ENCODE measurements at regions of chrX and their contacts with region 1.

Region 1: GRCh38 chrX:72142094-72142793 is 10.5 kb upstream of the RTL5 start:
- DNase-seq: no peak
- H3K4me3 Mint-ChIP-seq: no peak overlapping the region
- H3K27ac Mint-ChIP-seq: no peak overlapping the region
- H3K4me1 Mint-ChIP-seq: peaks cover 33% of the 10 kb centered on the region
- H3K27me3 Mint-ChIP-seq: peaks cover 28% of the 10 kb centered on the region

Region 2: DNA sequence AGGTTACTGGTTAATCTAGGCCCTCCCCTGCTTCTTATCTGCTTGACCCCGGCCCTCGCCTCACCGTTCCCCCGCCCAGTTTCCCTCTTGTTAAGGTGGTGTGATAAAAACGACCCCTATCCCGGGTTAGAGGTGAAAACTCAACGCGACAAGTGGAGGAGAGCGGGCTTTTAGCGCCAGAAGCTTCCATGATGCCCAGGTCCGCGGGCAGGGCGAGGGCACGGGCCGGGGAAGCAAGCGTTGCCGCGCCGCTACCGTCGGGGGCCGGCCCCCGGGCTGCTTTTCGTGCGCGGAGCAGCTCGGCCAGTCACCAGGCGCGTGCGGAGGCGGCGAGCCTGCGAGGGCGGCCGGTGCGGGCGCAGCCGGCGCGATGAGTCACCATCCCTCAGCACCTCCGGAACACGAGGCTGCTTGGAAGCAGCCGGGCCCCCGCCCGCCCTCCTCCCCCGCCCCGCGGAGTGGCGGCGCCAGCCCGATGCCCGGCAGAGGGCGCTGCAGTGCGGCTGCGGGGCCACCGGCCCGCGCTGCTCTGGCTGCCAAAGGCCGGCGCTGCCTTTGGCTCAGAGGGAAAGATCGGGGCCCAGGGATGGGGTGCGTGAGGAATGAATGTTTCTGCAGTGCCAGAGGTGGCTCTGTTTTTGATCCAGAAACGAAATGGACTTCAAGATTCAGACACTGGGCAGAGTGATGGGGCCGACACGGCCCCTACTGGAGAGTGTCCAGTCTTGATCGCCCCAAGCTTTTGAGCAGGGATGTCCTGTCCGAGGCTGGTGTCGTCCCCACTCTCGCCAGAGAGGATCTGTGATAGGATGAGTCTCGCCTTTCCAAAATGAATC is 123.7 kb before region 1 on chrX:
- intact Hi-C with region 1: loop called (anchors 5 kb)
- DNase-seq: peak; percentile 70
- H3K4me3 Mint-ChIP-seq: no peak overlapping the region
- H3K27ac Mint-ChIP-seq: no peak overlapping the region
- H3K4me1 Mint-ChIP-seq: peaks cover 15% of the 10 kb centered on the region
- H3K27me3 Mint-ChIP-seq: peaks cover 44% of the 10 kb centered on the region

Region 3: GRCh38 chrX:72100824-72101351 is 41.4 kb before region 1 on chrX:
- intact Hi-C with region 1: loop called (anchors 2 kb)
- DNase-seq: peak; percentile 71
- H3K4me3 Mint-ChIP-seq: peak overlapping the region; percentile 52
- H3K27ac Mint-ChIP-seq: peak overlapping the region; percentile 85
- H3K4me1 Mint-ChIP-seq: peaks cover 50% of the 10 kb centered on the region
- H3K27me3 Mint-ChIP-seq: peaks cover 40% of the 10 kb centered on the region

Region 4: DNA sequence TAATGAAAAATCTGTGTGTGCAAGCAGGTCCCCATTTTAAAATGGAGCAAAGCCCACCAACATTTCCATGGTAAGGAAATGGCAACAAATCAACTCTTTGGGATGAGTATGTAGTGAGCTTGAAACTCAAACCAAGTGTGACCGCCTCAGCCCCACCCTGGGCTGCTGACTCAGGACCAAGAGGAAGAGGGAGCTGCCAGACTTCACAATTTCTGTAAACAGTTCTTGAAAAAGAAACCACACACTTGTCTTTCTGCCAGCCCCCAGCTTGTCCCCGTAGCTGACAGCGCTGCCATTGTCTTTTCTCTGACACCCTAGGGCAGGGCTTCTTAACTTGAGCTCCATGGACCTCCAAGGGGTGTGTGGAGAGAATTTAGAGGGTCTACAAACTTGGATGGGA is 20.9 kb before region 1 on chrX:
- intact Hi-C with region 1: loop called (anchors 2 kb)
- DNase-seq: no peak
- H3K4me3 Mint-ChIP-seq: peak overlapping the region; percentile 7
- H3K27ac Mint-ChIP-seq: no peak overlapping the region
- H3K4me1 Mint-ChIP-seq: peaks cover 43% of the 10 kb centered on the region
- H3K27me3 Mint-ChIP-seq: peaks cover 35% of the 10 kb centered on the region

Region 5: DNA sequence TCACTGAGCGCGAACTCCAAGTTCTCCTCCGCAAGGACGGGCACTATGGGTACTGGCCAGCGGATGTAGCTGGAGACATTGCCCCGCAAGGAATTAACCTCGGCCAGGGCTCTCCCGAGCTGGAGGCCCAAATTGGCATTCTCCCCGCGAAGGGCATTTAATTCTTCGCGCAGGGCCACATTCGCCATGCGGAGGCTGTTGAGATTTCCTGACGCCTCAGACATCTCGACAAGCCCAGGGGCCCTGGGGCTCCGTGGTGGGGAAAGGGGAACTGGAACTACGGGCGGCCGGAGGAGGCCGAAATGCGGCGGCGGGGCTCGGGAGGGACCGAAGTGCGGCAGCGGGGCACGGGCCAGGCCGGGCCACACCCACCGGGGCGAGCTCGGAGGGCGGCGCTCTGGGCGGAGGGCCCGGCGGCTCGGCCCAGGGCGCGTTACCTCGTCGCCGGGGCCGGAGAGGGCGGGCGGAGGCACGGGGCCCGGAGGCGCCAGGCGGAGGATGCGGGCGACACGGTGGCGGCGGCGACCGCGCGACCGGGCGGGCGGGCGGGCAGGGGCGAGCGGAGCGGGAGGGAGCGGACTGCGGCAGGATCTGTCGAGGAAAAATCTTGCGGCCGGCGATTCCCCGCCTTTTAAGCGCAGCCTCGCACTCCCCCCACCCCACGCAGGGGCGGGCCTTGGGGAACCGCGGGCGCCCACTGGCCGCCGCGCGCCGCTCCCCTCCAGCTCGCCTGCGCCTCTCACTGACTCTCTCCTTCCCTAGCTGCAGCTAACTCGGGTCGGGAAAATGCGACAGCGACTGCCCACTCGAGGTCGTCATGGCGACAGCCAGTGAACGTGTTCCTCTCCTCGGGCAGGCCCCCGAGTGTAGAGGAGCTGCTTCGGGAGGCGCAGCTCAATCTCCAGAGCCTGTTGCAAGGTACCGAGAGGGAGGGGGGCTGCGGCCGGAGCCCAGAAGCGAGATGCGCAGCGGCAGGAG is 10.6 kb before region 1 on chrX and contains the start of gene RTL5:
- intact Hi-C with region 1: no loop called
- DNase-seq: no peak
- H3K4me3 Mint-ChIP-seq: peak within 1 kb of the TSS; percentile 43
- H3K27ac Mint-ChIP-seq: no peak within 1 kb of the TSS
- H3K4me1 Mint-ChIP-seq: peaks cover 7% of the 10 kb centered on the region
- H3K27me3 Mint-ChIP-seq: peaks cover 58% of the 10 kb centered on the region
- total RNA-seq, gene RTL5: 0.26 and 0.29 TPM in 2 replicates

Region 6: DNA sequence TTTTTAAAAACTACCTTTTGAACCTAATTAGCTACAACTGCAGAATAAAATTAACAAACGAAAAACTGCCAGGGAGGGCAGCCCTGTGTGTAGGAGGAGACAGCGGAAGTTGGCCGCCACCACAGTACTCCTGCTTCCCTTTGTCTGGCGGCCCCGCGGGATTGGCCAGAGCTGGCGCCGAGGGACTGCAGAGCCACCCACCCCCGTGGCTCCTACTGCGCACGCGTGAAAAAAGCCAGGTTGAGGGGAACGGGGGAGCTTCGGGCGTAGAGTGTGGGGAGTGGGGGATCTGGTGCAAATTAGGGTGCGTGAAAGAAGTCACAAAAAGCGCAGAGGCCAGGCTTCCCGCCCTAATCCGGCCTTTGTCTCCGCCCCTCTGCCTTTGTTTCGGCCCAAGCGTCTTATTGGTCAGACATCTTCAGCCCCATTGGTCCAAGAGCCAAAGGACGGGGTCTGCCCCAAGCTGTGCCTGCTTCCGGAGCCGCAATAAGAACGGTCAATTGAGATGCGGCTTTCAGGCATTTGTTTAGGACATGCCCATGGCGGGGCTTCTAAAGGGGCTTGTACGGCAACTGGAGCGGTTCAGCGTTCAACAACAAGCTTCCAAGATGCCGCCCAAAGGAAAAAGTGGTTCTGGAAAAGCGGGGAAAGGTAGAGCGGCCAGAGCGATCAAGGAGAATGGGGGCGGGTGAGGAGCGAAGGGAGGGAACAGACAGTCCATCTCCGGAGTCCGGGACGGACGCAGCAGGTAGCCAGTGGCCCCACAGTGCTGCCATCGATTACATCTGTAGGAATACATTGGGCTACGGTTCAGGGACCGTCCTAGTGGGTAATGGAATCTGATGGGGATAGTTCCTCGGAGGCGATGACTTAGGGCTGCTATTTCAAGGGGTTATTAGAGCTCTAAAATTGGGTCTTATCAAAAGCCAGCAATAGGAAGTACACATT is 39.2 kb after region 1 on chrX and contains the start of gene PIN4:
- intact Hi-C with region 1: loop called (anchors 1 kb)
- DNase-seq: peak; percentile 76
- H3K4me3 Mint-ChIP-seq: no peak within 1 kb of the TSS
- H3K27ac Mint-ChIP-seq: no peak within 1 kb of the TSS
- H3K4me1 Mint-ChIP-seq: peaks cover 16% of the 10 kb centered on the region
- H3K27me3 Mint-ChIP-seq: no peaks in the 10 kb centered on the region
- total RNA-seq, gene PIN4: 10.2 and 13.3 TPM in 2 replicates

Region 7: GRCh38 chrX:72238721-72239475 is 96.7 kb after region 1 on chrX and contains the start of gene ERCC6L:
- intact Hi-C with region 1: loop called (anchors 1 kb)
- DNase-seq: peak; percentile 84
- H3K4me3 Mint-ChIP-seq: peak within 1 kb of the TSS; percentile 84
- H3K27ac Mint-ChIP-seq: peak within 1 kb of the TSS; percentile 67
- H3K4me1 Mint-ChIP-seq: peaks cover 9% of the 10 kb centered on the region
- H3K27me3 Mint-ChIP-seq: no peaks in the 10 kb centered on the region
- total RNA-seq, gene ERCC6L: 7.4 and 7.5 TPM in 2 replicates